ENCODE measurements at regions of chr2 and their contacts with region 1.

Region 1: DNA sequence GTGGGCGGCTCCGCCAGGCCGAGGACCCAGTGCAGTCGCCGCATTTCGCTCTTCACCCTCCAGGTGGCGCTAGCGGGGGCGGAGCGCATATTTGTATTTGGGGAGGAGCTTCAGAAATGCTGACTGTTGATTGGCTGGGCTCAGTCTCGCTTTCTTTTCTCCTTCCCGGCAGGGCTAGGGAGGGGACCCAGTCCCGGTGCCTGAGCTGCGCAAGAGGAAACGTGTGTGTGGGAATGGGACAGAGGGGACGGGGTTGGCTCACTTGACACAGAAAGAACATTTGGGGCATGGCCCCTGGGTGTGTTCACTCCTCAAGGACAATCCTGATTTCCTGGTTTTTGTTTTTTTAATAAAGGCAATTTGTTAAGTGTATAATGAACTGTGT is 20.3 kb upstream of the DNMT3A start:
- DNase-seq: peak; percentile 46
- H3K4me3 ChIP-seq: peak overlapping the region; percentile 31
- H3K27me3 ChIP-seq: no peaks in the 10 kb centered on the region
- CTCF ChIP-seq: peak; percentile 98

Region 2: DNA sequence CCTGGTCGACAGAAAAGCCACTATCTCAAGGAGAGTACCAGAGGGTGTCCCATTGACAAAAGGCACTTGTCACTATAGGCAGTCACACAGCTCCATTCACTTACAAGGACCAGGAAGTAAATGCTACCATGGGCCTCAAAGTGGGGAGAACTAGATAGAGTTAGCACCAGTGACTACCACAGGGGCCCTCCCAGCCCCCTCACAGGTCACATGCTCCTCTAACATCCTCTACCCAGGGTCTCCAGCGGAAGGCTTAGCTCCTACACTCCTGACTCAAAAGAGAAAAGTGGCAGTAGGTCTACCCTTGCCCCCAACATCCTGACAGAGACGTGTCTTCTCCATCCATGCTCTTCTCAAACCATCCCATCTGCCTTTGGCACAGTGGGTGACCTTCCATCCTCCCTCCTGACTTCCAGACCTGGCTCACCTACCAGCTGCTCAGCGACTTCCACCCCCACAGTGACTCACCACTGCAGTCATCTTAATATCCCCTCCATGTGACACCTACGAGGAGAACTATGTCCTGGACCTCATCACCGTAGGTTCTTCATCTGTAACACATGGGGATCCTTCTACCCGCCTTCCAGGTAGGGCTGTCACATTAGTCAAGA is 14.7 kb before region 1 on chr2:
- CTCF ChIA-PET with region 1: interaction called, 21 read pairs
- POLR2A ChIA-PET with region 1: no interaction called
- DNase-seq: no peak
- H3K4me3 ChIP-seq: no peak overlapping the region
- H3K27me3 ChIP-seq: no peaks in the 10 kb centered on the region
- CTCF ChIP-seq: no peak

Region 3: DNA sequence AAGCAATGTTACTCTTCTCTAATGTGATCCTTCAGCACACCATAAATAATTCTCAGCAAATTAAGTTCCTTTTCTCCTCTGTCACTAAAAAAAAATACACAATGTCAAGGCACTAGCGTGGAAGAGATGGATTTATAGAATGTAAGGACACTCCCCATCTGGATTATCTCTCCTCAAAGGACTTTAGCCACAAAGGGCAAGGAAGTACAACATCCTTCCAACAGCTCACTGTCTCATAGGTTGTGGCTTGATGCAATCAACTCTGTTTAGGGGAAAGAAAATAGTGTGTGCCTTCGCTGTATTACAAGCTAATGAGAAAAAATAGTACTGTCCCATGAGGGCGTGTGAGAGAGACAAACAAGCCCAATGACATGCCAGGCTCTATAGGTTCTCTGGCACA is 108.8 kb after region 1 on chr2:
- CTCF ChIA-PET with region 1: no interaction called
- POLR2A ChIA-PET with region 1: no interaction called
- DNase-seq: no peak
- H3K4me3 ChIP-seq: no peak overlapping the region
- H3K27me3 ChIP-seq: no peaks in the 10 kb centered on the region
- CTCF ChIP-seq: no peak